ENCODE measurements at regions of chr5 and their contacts with region 1.

Region 1: DNA sequence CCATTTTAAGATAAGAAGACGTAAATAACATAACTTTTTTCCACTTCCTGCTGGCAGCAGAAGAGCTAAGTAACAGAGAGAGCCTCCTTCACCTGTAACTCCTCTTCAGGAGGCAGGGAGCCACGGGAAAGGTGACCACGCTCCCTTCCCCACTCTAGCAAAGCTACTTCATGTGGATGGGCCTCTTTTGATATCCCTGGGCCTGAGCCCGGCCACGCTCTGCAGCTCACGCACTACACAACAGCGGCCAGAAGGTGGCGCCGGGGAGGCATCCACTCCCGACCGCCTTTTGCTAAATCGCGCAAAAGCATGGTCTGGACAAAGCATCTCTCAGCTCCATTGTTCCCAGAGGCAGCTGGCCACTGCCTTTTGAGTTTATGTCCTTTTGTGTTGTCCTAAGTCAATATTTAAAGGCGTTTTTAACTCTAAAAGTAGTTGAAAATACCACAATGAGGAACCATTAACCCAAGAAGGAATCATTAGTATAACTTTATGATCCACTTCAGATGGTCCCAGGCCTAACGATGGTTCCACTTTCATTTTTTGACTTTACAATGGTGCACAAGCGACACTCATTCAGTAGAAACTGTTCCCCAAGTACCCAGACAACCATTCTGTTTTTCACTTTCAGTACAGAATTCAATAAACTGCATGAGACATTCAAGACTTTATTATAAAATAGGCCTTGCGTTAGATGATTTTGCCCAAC is 23.6 kb downstream of the CMBL start:
- DNase-seq: peak; percentile 85
- H3K4me3 ChIP-seq: peak overlapping the region in 1 of 2 experiments; percentile 31; a peak in 1 of 4 replicates
- H3K27ac ChIP-seq: no peak overlapping the region
- H3K4me1 ChIP-seq: peaks cover 0 to 6% of the 10 kb centered on the region in 2 experiments; a peak in 1 of 4 replicates
- H3K27me3 ChIP-seq: no peaks in the 10 kb centered on the region
- CTCF ChIP-seq: peak; percentile 89
- EP300 ChIP-seq: no peak
- RAD21 ChIP-seq: peak; percentile 84

Region 2: GRCh38 chr5:9799606-9800005 is 484.5 kb before region 1 on chr5:
- CTCF ChIA-PET with region 1: no interaction called
- POLR2A ChIA-PET with region 1: no interaction called
- DNase-seq: no peak
- H3K4me3 ChIP-seq: no peak overlapping the region
- H3K27ac ChIP-seq: no peak overlapping the region
- H3K4me1 ChIP-seq: no peaks in the 10 kb centered on the region
- H3K27me3 ChIP-seq: no peaks in the 10 kb centered on the region
- CTCF ChIP-seq: no peak
- EP300 ChIP-seq: no peak
- RAD21 ChIP-seq: no peak

Region 3: DNA sequence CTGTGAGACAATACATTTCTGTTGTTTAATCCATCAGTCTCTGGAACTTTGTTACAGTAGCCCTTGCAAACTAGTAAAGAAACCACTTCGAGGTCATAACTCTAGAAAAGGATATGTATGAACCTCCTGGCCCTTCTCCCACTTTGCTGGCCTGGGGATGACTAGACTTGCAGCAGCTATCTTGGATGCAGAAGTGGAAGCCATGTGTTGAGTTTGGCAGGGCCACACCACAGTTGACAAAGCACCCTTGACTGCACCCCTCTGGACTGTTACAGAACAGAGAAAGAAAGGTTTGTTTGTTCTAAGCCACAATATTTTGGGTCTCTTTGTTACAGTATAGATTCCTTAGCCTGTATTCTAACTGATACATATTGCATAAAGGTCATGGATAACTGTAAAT is 470.8 kb before region 1 on chr5:
- CTCF ChIA-PET with region 1: no interaction called
- POLR2A ChIA-PET with region 1: no interaction called
- DNase-seq: no peak
- H3K4me3 ChIP-seq: no peak overlapping the region
- H3K27ac ChIP-seq: no peak overlapping the region
- H3K4me1 ChIP-seq: no peaks in the 10 kb centered on the region
- H3K27me3 ChIP-seq: no peaks in the 10 kb centered on the region
- CTCF ChIP-seq: no peak
- EP300 ChIP-seq: no peak
- RAD21 ChIP-seq: no peak

Region 4: GRCh38 chr5:10085185-10085584 is 198.9 kb before region 1 on chr5:
- CTCF ChIA-PET with region 1: no interaction called
- POLR2A ChIA-PET with region 1: no interaction called
- DNase-seq: no peak
- H3K4me3 ChIP-seq: no peak overlapping the region
- H3K27ac ChIP-seq: no peak overlapping the region
- H3K4me1 ChIP-seq: no peaks in the 10 kb centered on the region
- H3K27me3 ChIP-seq: no peaks in the 10 kb centered on the region
- CTCF ChIP-seq: no peak
- EP300 ChIP-seq: no peak
- RAD21 ChIP-seq: no peak

Region 5: DNA sequence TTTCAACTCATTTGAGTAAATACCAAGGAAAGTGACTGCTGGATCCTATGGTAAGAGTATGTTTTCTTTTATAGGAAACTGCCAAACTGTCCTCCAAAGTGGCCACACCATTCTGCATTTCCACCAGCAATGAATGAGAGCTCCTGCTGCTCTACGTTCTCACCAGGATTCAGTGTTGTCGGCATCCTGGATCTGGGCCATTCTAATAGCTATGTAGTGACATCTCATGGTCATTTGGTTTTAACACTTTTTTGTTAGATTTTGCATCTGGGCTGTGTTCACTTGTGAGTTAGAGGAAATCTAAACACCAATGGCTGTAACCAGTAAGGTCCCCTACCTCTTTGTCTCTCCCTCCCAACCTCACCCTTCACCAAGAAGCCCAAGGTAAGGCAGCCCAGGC is 150.3 kb before region 1 on chr5:
- CTCF ChIA-PET with region 1: no interaction called
- POLR2A ChIA-PET with region 1: no interaction called
- DNase-seq: no peak
- H3K4me3 ChIP-seq: no peak overlapping the region
- H3K27ac ChIP-seq: no peak overlapping the region
- H3K4me1 ChIP-seq: no peaks in the 10 kb centered on the region
- H3K27me3 ChIP-seq: no peaks in the 10 kb centered on the region
- CTCF ChIP-seq: no peak
- EP300 ChIP-seq: no peak
- RAD21 ChIP-seq: peak; percentile 52

Region 6: GRCh38 chr5:10262121-10262774 is 21.8 kb before region 1 on chr5:
- CTCF ChIA-PET with region 1: interaction called, 21 read pairs
- POLR2A ChIA-PET with region 1: no interaction called
- DNase-seq: no peak
- H3K4me3 ChIP-seq: no peak overlapping the region
- H3K27ac ChIP-seq: no peak overlapping the region
- H3K4me1 ChIP-seq: no peaks in the 10 kb centered on the region
- H3K27me3 ChIP-seq: no peaks in the 10 kb centered on the region
- CTCF ChIP-seq: no peak
- EP300 ChIP-seq: no peak
- RAD21 ChIP-seq: no peak

Region 7: DNA sequence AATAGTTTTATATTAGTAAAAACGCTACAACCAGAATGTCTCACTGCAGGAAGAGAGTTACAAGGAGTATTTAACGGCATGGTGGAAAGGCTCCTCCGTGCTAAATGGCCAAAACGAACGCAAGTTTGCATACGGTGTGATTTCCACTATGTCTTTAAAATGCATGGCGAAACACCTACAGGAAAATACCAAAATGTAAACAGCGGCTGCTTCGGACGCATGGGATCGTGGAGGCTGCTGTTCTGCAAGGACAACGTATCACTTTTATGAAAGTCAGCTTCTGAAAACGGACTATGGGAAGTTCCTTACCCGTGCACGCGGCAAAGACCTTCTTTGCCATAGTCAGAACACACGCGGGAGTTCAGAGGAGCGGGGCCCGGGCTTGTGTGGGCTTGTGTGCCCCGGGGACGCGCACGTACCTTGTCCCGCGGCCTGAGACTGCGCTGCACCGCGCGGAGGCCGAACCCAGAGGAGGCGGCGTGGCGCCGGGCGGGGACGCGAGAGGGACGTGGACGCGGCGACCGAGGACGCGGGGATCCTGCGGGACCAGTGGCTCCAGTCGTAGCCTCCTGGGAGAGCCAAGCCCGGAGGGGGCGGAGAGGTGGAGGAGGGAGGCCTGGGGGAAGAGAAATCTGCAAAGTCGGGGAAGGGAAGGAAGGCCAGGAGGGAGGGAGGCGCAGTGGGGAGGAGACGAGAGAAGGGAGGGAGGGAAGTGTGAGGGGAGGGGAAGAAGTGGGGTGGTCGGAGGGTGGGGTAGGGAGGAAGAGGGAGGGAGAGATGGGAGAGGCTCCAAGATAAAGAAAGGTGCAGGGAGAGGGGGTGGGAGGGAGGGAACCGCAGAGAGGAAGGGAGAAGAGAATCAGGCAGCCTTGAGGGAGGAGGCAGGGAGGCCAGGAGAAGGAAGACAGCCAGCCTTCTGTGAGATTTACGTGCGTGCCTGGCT is 23.4 kb after region 1 on chr5 and contains the start of gene CMBL:
- CTCF ChIA-PET with region 1: interaction called, 14 read pairs
- POLR2A ChIA-PET with region 1: no interaction called
- DNase-seq: peak; percentile 80
- H3K4me3 ChIP-seq: peak within 1 kb of the TSS; percentile 60 to 71
- H3K27ac ChIP-seq: peak within 1 kb of the TSS; percentile 42 to 70
- H3K4me1 ChIP-seq: peaks cover 10 to 17% of the 10 kb centered on the region in 2 experiments; a peak in 2 of 4 replicates
- H3K27me3 ChIP-seq: no peaks in the 10 kb centered on the region
- CTCF ChIP-seq: no peak
- EP300 ChIP-seq: no peak
- RAD21 ChIP-seq: no peak
- polyA plus RNA-seq, gene CMBL: 42.9 and 61.0 TPM in 2 replicates

Region 8: GRCh38 chr5:10409504-10409903 is 125.4 kb after region 1 on chr5:
- CTCF ChIA-PET with region 1: interaction called, 10 read pairs
- POLR2A ChIA-PET with region 1: no interaction called
- DNase-seq: no peak
- H3K4me3 ChIP-seq: no peak overlapping the region
- H3K27ac ChIP-seq: no peak overlapping the region
- H3K4me1 ChIP-seq: no peaks in the 10 kb centered on the region; a peak in 1 of 4 replicates
- H3K27me3 ChIP-seq: no peaks in the 10 kb centered on the region
- CTCF ChIP-seq: no peak
- EP300 ChIP-seq: no peak
- RAD21 ChIP-seq: no peak

Region 9: DNA sequence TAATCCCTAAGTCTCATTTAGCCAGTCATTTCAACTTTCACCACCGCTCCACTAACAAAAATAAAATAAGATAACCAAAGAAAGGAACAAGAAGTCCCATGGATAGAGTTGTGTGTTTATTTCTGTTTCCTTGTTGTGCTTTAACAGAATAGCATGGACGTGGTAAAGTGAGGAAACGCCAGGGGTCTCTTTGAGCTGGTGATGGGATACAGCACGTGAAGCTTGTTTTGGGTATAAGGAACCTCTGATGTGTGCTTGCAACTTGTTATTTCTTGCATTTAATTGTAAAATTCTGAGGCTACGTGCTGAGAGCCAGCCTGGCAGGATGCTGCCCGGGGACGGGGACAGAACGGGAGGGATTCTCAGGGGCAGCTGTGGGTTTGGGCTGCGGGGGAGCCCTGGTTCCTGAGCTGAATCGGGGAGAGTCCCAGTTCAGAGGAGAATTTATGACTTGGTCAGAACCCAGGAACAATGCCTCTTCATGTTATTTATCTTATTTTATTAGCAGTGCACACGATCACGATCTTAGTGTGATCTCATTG is 343.1 kb after region 1 on chr5:
- CTCF ChIA-PET with region 1: interaction called, 18 read pairs
- POLR2A ChIA-PET with region 1: no interaction called
- DNase-seq: peak; percentile 64
- H3K4me3 ChIP-seq: peak overlapping the region; percentile 39 to 43
- H3K27ac ChIP-seq: peak overlapping the region; percentile 28 to 63; a peak in 2 of 4 replicates
- H3K4me1 ChIP-seq: peaks cover 0 to 7% of the 10 kb centered on the region in 2 experiments; a peak in 2 of 4 replicates
- H3K27me3 ChIP-seq: no peaks in the 10 kb centered on the region
- CTCF ChIP-seq: no peak
- EP300 ChIP-seq: no peak
- RAD21 ChIP-seq: no peak